Ascending aorta (tissue), 2 donors: ENCODE measurements at regions of chr11 and their contacts with region 1.

Region 1: GRCh38 chr11:17978553-17979287 is 34.1 kb downstream of the SERGEF start:
- DNase-seq: no peak
- H3K4me3 ChIP-seq: no peak overlapping the region
- H3K27ac ChIP-seq: no peak overlapping the region
- H3K4me1 ChIP-seq: peaks cover 0 to 5% of the 10 kb centered on the region in 2 donors
- H3K27me3 ChIP-seq: no peaks in the 10 kb centered on the region
- CTCF ChIP-seq: peak in 2 of 3 experiments; percentile 35 to 56

Region 2: DNA sequence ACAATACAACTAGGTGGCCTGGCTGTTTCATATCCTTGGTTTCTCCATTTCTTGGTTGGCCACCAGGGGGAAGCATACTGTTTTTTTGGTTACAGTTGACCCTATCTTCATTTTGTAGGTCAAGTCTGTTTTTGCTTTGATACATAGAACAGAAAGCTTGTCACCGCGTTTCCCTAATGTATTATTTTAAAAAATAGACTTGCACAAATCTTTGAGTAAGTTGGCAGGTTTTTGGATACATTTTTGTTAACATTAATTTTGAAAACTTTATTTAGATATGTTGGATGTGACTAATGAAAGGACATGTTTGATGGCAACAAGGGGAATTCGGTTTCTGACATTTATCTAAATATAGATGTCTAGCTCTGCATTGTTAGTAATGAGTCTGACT is 624.1 kb before region 1 on chr11:
- intact Hi-C with region 1: loop called (anchors 10 kb)
- DNase-seq: peak in 1 of 2 donors; percentile 86
- H3K4me3 ChIP-seq: peak overlapping the region in 1 of 2 donors; percentile 98
- H3K27ac ChIP-seq: no peak overlapping the region
- H3K4me1 ChIP-seq: peaks cover 0 to 7% of the 10 kb centered on the region in 2 donors
- H3K27me3 ChIP-seq: no peaks in the 10 kb centered on the region
- CTCF ChIP-seq: peak; percentile 39 to 57 (median 53)

Region 3: GRCh38 chr11:17384002-17384511 is 594.7 kb before region 1 on chr11:
- intact Hi-C with region 1: loop called (anchors 10 kb)
- DNase-seq: peak in 1 of 2 donors; percentile 88
- H3K4me3 ChIP-seq: no peak overlapping the region
- H3K27ac ChIP-seq: no peak overlapping the region
- H3K4me1 ChIP-seq: peaks cover 7 to 8% of the 10 kb centered on the region in 2 donors
- H3K27me3 ChIP-seq: no peaks in the 10 kb centered on the region
- CTCF ChIP-seq: peak; percentile 87 to 96 (median 88)

Region 4: GRCh38 chr11:17439316-17439782 is 539.4 kb before region 1 on chr11:
- intact Hi-C with region 1: no loop called
- DNase-seq: no peak
- H3K4me3 ChIP-seq: no peak overlapping the region
- H3K27ac ChIP-seq: no peak overlapping the region
- H3K4me1 ChIP-seq: no peaks in the 10 kb centered on the region
- H3K27me3 ChIP-seq: no peaks in the 10 kb centered on the region
- CTCF ChIP-seq: no peak

Region 5: GRCh38 chr11:17598700-17599459 is 379.8 kb before region 1 on chr11:
- intact Hi-C with region 1: loop called (anchors 2 kb)
- DNase-seq: peak in 1 of 2 donors; percentile 75
- H3K4me3 ChIP-seq: no peak overlapping the region
- H3K27ac ChIP-seq: no peak overlapping the region
- H3K4me1 ChIP-seq: no peaks in the 10 kb centered on the region
- H3K27me3 ChIP-seq: no peaks in the 10 kb centered on the region
- CTCF ChIP-seq: peak; percentile 66 to 86 (median 81)

Region 6: GRCh38 chr11:17730608-17731462 is 247.9 kb before region 1 on chr11:
- intact Hi-C with region 1: loop called (anchors 2 kb)
- DNase-seq: peak; percentile 26 to 80
- H3K4me3 ChIP-seq: no peak overlapping the region
- H3K27ac ChIP-seq: no peak overlapping the region
- H3K4me1 ChIP-seq: peaks cover 4 to 9% of the 10 kb centered on the region in 2 donors
- H3K27me3 ChIP-seq: peaks cover 4% of the 10 kb centered on the region
- CTCF ChIP-seq: peak; percentile 70 to 89 (median 84)

Region 7: GRCh38 chr11:17760102-17761029 is 218.4 kb before region 1 on chr11:
- intact Hi-C with region 1: loop called (anchors 10 kb)
- DNase-seq: no peak
- H3K4me3 ChIP-seq: no peak overlapping the region
- H3K27ac ChIP-seq: no peak overlapping the region
- H3K4me1 ChIP-seq: no peaks in the 10 kb centered on the region
- H3K27me3 ChIP-seq: no peaks in the 10 kb centered on the region
- CTCF ChIP-seq: peak; percentile 30 to 47 (median 46)

Region 8: DNA sequence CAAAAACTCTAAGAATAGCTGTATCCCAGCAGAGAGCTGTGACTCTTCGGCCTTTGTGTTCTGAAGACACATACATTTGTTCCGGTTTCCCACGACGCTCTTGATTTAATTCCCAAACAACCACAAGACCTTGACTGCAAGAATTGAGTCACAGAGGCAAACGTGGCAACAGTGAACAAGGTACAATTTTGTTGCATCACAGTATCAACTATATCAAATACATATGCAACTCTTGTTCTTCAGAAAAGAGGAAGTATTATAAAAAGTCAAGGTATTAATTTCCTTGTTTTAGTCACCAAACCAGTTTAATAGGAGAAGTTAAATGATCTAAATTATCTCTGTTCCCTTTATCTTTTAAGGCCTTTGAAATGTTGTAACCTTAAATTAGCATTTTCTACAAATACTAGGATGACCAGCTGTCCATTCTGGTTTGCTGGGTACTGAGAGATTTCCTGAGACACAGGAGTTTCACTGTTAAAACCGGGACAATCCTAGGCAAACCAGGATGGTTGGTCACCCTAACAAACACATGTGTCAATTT is 332.1 kb after region 1 on chr11:
- intact Hi-C with region 1: loop called (anchors 10 kb)
- DNase-seq: no peak
- H3K4me3 ChIP-seq: no peak overlapping the region
- H3K27ac ChIP-seq: peak overlapping the region; percentile 86 to 90
- H3K4me1 ChIP-seq: peaks cover 13 to 40% of the 10 kb centered on the region in 2 donors
- H3K27me3 ChIP-seq: no peaks in the 10 kb centered on the region
- CTCF ChIP-seq: no peak

Region 9: GRCh38 chr11:18383388-18384156 is 404.9 kb after region 1 on chr11:
- intact Hi-C with region 1: no loop called
- DNase-seq: peak; percentile 88 to 98
- H3K4me3 ChIP-seq: peak overlapping the region in 1 of 2 donors; percentile 30
- H3K27ac ChIP-seq: peak overlapping the region; percentile 95 to 96
- H3K4me1 ChIP-seq: peaks cover 15 to 28% of the 10 kb centered on the region in 2 donors
- H3K27me3 ChIP-seq: no peaks in the 10 kb centered on the region
- CTCF ChIP-seq: no peak